Activated T-helper 1 cell treated with anti-CD3 and anti-CD28 coated beads, Interleukin-12 subunit alpha, Interleukin-12 subunit beta, Interleukin-2, Interleukin-4 antibody, amounts not matched to agents 30 ng/mL and 10 ng/mL and 1 ng/mL, durations not matched to agents 14 hours and 24 hours and 36 hours (primary cell): ENCODE measurements at regions of chr6 and their contacts with region 1.

Region 1: DNA sequence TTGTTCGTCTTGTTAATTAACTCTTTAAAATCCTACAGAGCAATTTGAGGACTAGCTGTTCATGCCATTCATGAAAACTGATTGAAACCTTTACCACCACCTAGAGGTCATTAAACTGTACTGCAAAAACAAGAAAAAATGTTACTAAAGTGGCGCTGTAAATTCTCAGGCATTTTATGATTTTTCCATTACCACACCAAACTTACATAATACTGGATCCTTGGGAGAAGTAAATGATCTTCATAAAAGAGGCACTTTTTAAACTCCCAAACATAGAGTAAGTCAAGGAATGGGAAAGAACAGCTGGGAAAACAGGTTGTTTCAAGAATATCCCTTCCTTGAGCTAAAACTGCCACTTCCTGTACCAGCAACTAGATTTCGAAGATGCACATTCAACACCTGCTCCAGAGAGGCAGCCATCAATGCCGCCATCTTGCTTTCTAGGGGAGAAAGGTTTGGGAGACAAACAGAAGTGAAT is 54.3 kb downstream of the MYLIP start:
- DNase-seq: no peak
- H3K4me3 Mint-ChIP-seq: peak overlapping the region; percentile 5
- H3K27ac Mint-ChIP-seq: no peak overlapping the region
- H3K4me1 Mint-ChIP-seq: peaks cover 44% of the 10 kb centered on the region
- H3K27me3 Mint-ChIP-seq: peaks cover 13% of the 10 kb centered on the region

Region 2: DNA sequence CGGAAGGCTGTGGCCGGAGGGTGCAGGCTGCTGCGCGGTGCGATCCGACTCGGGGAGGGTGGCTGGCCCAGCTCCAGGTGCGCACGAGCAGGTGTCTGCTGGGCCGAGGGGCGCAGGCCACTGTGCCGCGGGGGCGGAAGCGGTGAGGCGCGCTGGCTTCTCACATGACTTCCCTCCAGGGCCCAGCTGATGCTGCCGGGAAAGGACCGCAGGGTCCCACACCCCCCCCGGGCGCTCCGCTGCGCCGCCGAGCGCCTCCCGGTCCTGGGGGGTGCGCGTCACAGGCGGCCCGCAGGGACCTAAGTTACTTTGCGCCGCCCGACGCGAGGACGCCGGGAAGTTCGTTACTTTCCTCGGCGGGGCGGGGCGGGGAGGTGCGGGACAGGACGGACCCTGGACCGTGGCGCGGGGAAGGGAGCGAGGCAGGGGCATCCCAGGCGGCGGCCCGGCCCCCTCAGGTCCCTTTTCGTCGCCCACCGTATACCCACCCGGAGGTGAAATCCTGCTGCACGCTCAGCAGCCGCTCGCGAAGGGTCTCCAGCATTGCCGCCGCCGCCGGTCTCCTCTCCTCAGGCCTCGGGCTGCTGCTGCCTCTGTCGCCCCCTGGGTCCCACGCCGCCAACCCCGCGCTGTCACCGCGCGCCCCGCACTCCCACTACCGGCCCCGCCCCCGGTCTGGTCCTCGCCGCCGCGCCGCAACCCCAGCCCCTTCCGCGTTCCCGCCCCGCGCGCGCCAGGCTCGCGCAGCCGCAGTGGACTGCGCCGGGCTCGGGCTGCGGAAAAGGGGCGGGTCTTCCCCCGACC is 520.7 kb before region 1 on chr6 and contains the start of gene DTNBP1:
- intact Hi-C with region 1: loop called (anchors 1 kb)
- DNase-seq: peak; percentile 85
- H3K4me3 Mint-ChIP-seq: peak within 1 kb of the TSS; percentile 81
- H3K27ac Mint-ChIP-seq: peak within 1 kb of the TSS; percentile 77
- H3K4me1 Mint-ChIP-seq: peaks cover 24% of the 10 kb centered on the region
- H3K27me3 Mint-ChIP-seq: peaks cover 14% of the 10 kb centered on the region
- total RNA-seq, gene DTNBP1: 17.2 and 19.2 TPM in 2 replicates

Region 3: GRCh38 chr6:15893556-15894268 is 289.5 kb before region 1 on chr6:
- intact Hi-C with region 1: loop called (anchors 1 kb)
- DNase-seq: no peak
- H3K4me3 Mint-ChIP-seq: no peak overlapping the region
- H3K27ac Mint-ChIP-seq: no peak overlapping the region
- H3K4me1 Mint-ChIP-seq: peaks cover 5% of the 10 kb centered on the region
- H3K27me3 Mint-ChIP-seq: peaks cover 2% of the 10 kb centered on the region

Region 4: GRCh38 chr6:16136621-16137450 is 46.4 kb before region 1 on chr6:
- intact Hi-C with region 1: loop called (anchors 1 kb)
- DNase-seq: no peak
- H3K4me3 Mint-ChIP-seq: peak overlapping the region; percentile 73
- H3K27ac Mint-ChIP-seq: peak overlapping the region; percentile 95
- H3K4me1 Mint-ChIP-seq: peaks cover 78% of the 10 kb centered on the region
- H3K27me3 Mint-ChIP-seq: no peaks in the 10 kb centered on the region

Region 5: GRCh38 chr6:16168858-16169257 is 14.4 kb before region 1 on chr6:
- intact Hi-C with region 1: loop called (anchors 2 kb)
- DNase-seq: no peak
- H3K4me3 Mint-ChIP-seq: no peak overlapping the region
- H3K27ac Mint-ChIP-seq: no peak overlapping the region
- H3K4me1 Mint-ChIP-seq: peaks cover 27% of the 10 kb centered on the region
- H3K27me3 Mint-ChIP-seq: peaks cover 12% of the 10 kb centered on the region

Region 6: DNA sequence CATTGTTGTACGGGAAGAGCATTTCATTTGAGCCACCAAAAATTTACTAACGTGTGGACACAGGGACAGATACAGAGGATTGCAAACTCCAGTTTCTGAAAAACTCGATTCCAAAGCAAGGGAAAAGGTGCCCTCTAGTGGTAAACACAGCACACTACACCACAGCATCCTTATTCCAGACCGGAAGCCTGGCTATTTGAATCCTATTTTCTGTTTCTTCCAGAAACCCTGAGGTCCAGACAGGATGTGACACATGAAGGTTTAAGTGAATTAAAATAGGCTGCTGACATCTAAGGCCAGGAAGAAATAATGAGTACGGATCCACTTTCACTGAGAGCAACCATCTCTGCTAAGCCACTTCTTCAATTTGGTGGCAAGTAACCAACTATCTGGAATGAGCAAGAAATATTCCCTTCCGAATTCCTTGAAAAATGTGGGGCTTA is 23.4 kb after region 1 on chr6:
- intact Hi-C with region 1: loop called (anchors 1 kb)
- DNase-seq: peak; percentile 22
- H3K4me3 Mint-ChIP-seq: no peak overlapping the region
- H3K27ac Mint-ChIP-seq: no peak overlapping the region
- H3K4me1 Mint-ChIP-seq: peaks cover 6% of the 10 kb centered on the region
- H3K27me3 Mint-ChIP-seq: peaks cover 27% of the 10 kb centered on the region

Region 7: GRCh38 chr6:17212546-17213371 is 1029.5 kb after region 1 on chr6:
- intact Hi-C with region 1: no loop called
- DNase-seq: no peak
- H3K4me3 Mint-ChIP-seq: no peak overlapping the region
- H3K27ac Mint-ChIP-seq: no peak overlapping the region
- H3K4me1 Mint-ChIP-seq: no peaks in the 10 kb centered on the region
- H3K27me3 Mint-ChIP-seq: no peaks in the 10 kb centered on the region